ENCODE measurements at regions of chr4 and their contacts with region 1.

Region 1: GRCh38 chr4:40550948-40551462 is 78.7 kb downstream of the RBM47 start:
- DNase-seq: peak; percentile 80
- ATAC-seq: peak; percentile 82
- H3K4me3 ChIP-seq: peak overlapping the region; percentile 11 to 72 (median 56)
- H3K4me3 Mint-ChIP-seq: peak overlapping the region; percentile 84
- H3K27ac ChIP-seq: peak overlapping the region; percentile 77 to 84
- H3K27ac Mint-ChIP-seq: peak overlapping the region; percentile 88
- H3K4me1 ChIP-seq: peaks cover 17 to 21% of the 10 kb centered on the region in 2 donors
- H3K4me1 Mint-ChIP-seq: peaks cover 32% of the 10 kb centered on the region
- H3K27me3 ChIP-seq: no peaks in the 10 kb centered on the region
- H3K27me3 Mint-ChIP-seq: no peaks in the 10 kb centered on the region
- CTCF ChIP-seq: peak; percentile 59

Region 2: GRCh38 chr4:40462326-40462725 is 88.7 kb before region 1 on chr4:
- CTCF ChIA-PET with region 1: no interaction called
- POLR2A ChIA-PET with region 1: no interaction called
- intact Hi-C with region 1: loop called (anchors 10 kb)
- DNase-seq: peak; percentile 77
- ATAC-seq: peak; percentile 82
- H3K4me3 ChIP-seq: no peak overlapping the region
- H3K4me3 Mint-ChIP-seq: no peak overlapping the region
- H3K27ac ChIP-seq: peak overlapping the region in 1 of 2 donors; percentile 8
- H3K27ac Mint-ChIP-seq: peak overlapping the region; percentile 47
- H3K4me1 ChIP-seq: peaks cover 0 to 8% of the 10 kb centered on the region in 2 donors
- H3K4me1 Mint-ChIP-seq: peaks cover 16% of the 10 kb centered on the region
- H3K27me3 ChIP-seq: no peaks in the 10 kb centered on the region
- H3K27me3 Mint-ChIP-seq: no peaks in the 10 kb centered on the region
- CTCF ChIP-seq: no peak

Region 3: GRCh38 chr4:40515398-40516293 is 35.4 kb before region 1 on chr4:
- CTCF ChIA-PET with region 1: interaction called, 3 read pairs
- POLR2A ChIA-PET with region 1: no interaction called
- intact Hi-C with region 1: loop called (anchors 2 kb)
- DNase-seq: peak; percentile 84
- ATAC-seq: peak; percentile 85
- H3K4me3 ChIP-seq: peak overlapping the region in 2 of 5 experiments; percentile 43 to 56
- H3K4me3 Mint-ChIP-seq: peak overlapping the region; percentile 82
- H3K27ac ChIP-seq: peak overlapping the region; percentile 38 to 66
- H3K27ac Mint-ChIP-seq: peak overlapping the region; percentile 61
- H3K4me1 ChIP-seq: peaks cover 25 to 36% of the 10 kb centered on the region in 2 donors
- H3K4me1 Mint-ChIP-seq: peaks cover 44% of the 10 kb centered on the region
- H3K27me3 ChIP-seq: no peaks in the 10 kb centered on the region
- H3K27me3 Mint-ChIP-seq: no peaks in the 10 kb centered on the region
- CTCF ChIP-seq: no peak

Region 4: DNA sequence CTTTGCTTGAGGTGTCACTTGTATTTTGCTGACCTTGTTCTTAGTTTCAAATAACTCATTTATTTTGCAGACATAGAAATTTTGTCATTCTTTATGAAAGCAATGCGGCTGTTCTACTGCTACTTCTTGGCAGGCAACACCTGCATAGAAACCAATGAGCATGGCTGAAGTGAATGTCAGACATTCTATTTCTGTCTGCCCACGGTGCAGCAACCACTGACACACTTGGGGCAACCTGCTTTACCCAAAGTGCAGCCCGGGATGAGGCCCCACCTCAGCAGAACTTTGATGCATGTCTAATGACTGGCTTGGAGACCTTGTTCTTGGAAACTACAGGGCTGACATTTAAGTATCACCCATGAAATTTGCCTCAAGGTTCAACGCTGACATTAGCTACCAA is 15.0 kb before region 1 on chr4:
- CTCF ChIA-PET with region 1: interaction called, 6 read pairs
- POLR2A ChIA-PET with region 1: no interaction called
- intact Hi-C with region 1: loop called (anchors 2 kb)
- DNase-seq: peak; percentile 59
- ATAC-seq: peak; percentile 77
- H3K4me3 ChIP-seq: no peak overlapping the region
- H3K4me3 Mint-ChIP-seq: peak overlapping the region; percentile 83
- H3K27ac ChIP-seq: peak overlapping the region in 1 of 2 donors; percentile 7
- H3K27ac Mint-ChIP-seq: peak overlapping the region; percentile 90
- H3K4me1 ChIP-seq: peaks cover 5 to 19% of the 10 kb centered on the region in 2 donors
- H3K4me1 Mint-ChIP-seq: peaks cover 18% of the 10 kb centered on the region
- H3K27me3 ChIP-seq: no peaks in the 10 kb centered on the region
- H3K27me3 Mint-ChIP-seq: no peaks in the 10 kb centered on the region
- CTCF ChIP-seq: no peak

Region 5: DNA sequence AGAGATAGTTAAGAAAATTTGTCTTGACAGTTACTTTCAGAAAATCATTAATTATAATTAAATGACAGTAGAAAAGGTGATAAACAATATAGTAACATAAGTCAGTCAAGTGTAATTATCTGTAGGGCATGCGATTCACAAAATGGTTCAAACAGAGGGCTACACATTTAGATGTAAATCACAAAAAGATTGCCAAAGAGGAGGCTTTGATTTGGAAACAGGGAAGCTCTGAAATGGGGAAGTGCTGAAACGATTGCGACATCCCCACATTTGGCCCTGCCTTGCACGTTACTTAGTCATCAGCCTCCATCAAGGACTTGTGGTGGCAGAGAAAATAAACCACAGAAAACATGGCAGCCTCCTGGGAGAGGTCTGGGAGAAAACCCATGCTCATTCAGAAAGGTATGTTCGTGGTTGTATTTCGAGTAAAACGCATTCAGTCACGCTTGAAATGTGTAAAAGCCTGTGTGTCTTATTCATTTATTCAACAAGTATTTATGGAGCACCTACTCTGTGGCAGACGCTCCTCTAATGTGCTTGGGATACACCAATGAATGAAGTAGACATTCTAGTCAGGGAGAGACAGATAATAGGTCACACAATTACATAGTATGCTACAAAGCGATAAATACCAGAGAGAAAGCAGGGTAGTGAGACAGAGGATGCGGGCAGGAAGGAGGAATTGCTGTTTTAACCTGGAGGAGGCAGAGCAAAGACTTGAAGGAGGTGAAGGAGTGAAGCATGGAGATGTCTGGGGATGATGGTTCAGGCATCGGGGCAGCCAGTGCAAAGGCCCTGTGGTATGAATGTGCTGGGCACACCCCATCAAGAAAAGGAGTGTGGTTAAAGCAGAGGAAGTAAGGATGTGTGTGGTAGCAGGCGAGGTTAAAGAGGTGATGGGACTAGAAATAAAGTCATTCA is 70.8 kb after region 1 on chr4:
- CTCF ChIA-PET with region 1: no interaction called
- POLR2A ChIA-PET with region 1: no interaction called
- intact Hi-C with region 1: loop called (anchors 5 kb)
- DNase-seq: peak; percentile 75
- ATAC-seq: peak; percentile 88
- H3K4me3 ChIP-seq: peak overlapping the region in 1 of 5 experiments; percentile 5
- H3K4me3 Mint-ChIP-seq: peak overlapping the region; percentile 47
- H3K27ac ChIP-seq: no peak overlapping the region
- H3K27ac Mint-ChIP-seq: peak overlapping the region; percentile 62
- H3K4me1 ChIP-seq: peaks cover 12 to 17% of the 10 kb centered on the region in 2 donors
- H3K4me1 Mint-ChIP-seq: peaks cover 14% of the 10 kb centered on the region
- H3K27me3 ChIP-seq: no peaks in the 10 kb centered on the region
- H3K27me3 Mint-ChIP-seq: peaks cover 3% of the 10 kb centered on the region
- CTCF ChIP-seq: no peak

Region 6: DNA sequence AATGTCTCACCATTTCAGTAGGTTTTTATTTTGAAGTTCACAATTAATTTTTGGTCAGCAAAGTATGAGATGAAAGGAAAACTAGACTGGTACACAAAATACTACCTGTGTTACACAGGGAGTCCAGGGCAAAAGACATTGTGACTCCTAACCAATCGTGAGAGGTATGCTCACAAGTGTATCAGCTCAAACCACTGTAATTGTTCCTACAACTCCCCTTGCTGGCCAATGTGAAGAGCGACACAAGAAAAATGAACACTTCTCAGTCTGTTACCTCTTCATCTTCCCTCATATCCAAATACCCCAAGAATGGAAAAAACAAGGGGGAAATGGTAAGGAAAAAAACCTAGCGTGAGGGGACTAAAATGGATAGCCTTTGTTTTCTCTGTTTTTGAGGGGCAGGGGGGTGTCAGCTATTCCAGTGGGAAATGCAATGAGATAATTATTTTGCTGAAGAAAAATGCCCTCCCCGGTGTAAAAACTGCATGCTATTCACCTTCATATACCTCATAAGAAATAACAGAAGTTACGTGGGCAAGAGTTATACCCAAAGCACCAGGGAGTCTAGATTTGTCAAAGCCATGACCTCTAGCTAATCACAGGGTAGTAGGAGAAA is 168.1 kb after region 1 on chr4:
- CTCF ChIA-PET with region 1: no interaction called
- POLR2A ChIA-PET with region 1: no interaction called
- intact Hi-C with region 1: loop called (anchors 5 kb)
- DNase-seq: peak; percentile 41
- ATAC-seq: no peak
- H3K4me3 ChIP-seq: no peak overlapping the region
- H3K4me3 Mint-ChIP-seq: no peak overlapping the region
- H3K27ac ChIP-seq: no peak overlapping the region
- H3K27ac Mint-ChIP-seq: no peak overlapping the region
- H3K4me1 ChIP-seq: peaks cover 21 to 30% of the 10 kb centered on the region in 2 donors
- H3K4me1 Mint-ChIP-seq: peaks cover 8% of the 10 kb centered on the region
- H3K27me3 ChIP-seq: no peaks in the 10 kb centered on the region
- H3K27me3 Mint-ChIP-seq: no peaks in the 10 kb centered on the region
- CTCF ChIP-seq: no peak

Measured in B cell (primary cell).